ENCODE measurements at regions of chr2 and their contacts with region 1.

Region 1: DNA sequence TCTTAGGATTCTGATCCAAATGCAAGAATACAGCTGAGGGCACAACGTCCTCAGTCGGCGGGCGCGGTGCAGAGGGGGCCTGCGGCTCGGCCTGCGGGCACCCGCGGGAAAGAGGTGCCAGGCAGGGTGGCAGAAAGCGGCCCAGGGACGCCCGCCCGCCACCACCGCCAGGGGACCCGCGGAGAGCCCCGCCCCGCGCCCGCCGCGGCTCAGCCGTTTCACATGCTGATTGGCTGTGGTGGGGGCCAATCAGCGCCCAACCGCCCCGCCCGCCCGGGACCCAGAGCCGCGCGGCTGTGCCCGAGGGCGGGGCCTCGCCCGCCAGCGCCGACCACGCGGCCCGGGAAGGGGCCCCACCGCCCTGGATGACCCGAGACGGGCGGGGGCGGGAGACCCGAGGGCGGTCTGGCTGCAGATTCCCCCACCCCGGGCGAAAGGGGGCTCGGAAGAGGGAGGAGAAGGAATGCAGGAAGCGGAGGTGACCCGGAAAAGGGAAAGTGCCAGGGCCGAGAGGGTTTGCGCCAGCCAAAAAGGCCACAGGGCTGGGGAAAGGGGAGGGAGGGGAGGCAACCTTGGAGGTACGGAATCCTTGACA is 8.0 kb downstream of the IRS1 start:
- DNase-seq: no peak
- H3K4me3 ChIP-seq: peak overlapping the region; percentile 70 to 95 (median 86)
- H3K27ac ChIP-seq: peak overlapping the region; percentile 94 to 96 (median 94)
- H3K4me1 ChIP-seq: peaks cover 66 to 87% (median 78%) of the 10 kb centered on the region in 4 donors
- H3K27me3 ChIP-seq: no peaks in the 10 kb centered on the region
- CTCF ChIP-seq: peak; percentile 36 to 64 (median 52)
- EP300 ChIP-seq: no peak
- POLR2A ChIP-seq: peak; percentile 71

Region 2: DNA sequence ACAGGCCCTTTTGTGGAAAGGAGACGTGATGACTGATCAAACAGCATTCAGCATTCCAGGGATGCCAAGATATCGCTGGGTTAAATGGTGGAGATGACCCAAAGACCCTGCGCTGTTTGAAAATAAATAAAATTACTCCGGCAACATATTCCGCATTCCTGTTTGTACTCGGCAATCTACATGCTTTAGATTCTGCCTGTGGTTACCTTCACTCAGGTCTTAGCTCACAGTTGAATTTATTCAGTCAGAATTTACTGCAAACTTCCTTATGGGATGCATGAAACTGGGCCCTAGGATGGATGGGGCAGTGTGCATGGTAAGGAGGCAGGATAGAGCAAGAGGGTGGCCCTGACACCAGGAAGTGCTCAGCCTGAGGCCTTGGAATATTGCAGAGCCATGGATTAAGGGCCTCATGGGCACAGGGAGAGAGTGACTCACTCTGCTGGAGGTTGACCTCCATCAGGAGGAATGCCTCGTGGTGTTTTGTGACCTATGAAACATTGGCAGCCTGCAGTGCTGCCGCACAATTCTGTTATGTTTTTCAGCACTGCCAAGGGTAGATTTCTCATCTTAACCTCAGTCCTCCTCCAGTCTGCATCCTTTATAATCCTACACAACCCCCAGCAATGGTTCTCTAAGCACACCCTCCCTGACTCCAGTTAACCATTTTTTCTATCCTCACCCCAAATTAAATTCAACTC is 313.3 kb before region 1 on chr2:
- intact Hi-C with region 1: loop called (anchors 10 kb)
- DNase-seq: no peak
- H3K4me3 ChIP-seq: no peak overlapping the region
- H3K27ac ChIP-seq: peak overlapping the region; percentile 51 to 72 (median 59)
- H3K4me1 ChIP-seq: peaks cover 0 to 29% (median 25%) of the 10 kb centered on the region in 4 donors
- H3K27me3 ChIP-seq: no peaks in the 10 kb centered on the region
- CTCF ChIP-seq: no peak
- EP300 ChIP-seq: no peak
- POLR2A ChIP-seq: no peak

Region 3: GRCh38 chr2:226622484-226622883 is 169.1 kb before region 1 on chr2:
- intact Hi-C with region 1: loop called (anchors 10 kb)
- DNase-seq: no peak
- H3K4me3 ChIP-seq: no peak overlapping the region
- H3K27ac ChIP-seq: no peak overlapping the region
- H3K4me1 ChIP-seq: peaks cover 0 to 27% (median 17%) of the 10 kb centered on the region in 4 donors
- H3K27me3 ChIP-seq: no peaks in the 10 kb centered on the region
- CTCF ChIP-seq: peak in 1 of 3 experiments; percentile 26
- EP300 ChIP-seq: no peak
- POLR2A ChIP-seq: no peak

Region 4: GRCh38 chr2:226649871-226650660 is 141.5 kb before region 1 on chr2:
- intact Hi-C with region 1: loop called (anchors 10 kb)
- DNase-seq: peak; percentile 92
- H3K4me3 ChIP-seq: no peak overlapping the region
- H3K27ac ChIP-seq: peak overlapping the region; percentile 60 to 70 (median 64)
- H3K4me1 ChIP-seq: peaks cover 15 to 25% (median 20%) of the 10 kb centered on the region in 4 donors
- H3K27me3 ChIP-seq: peaks cover 0 to 17% (median 0%) of the 10 kb centered on the region in 4 donors
- CTCF ChIP-seq: no peak
- EP300 ChIP-seq: no peak
- POLR2A ChIP-seq: no peak